ENCODE measurements at regions of chr15 and their contacts with region 1.

Region 1: GRCh38 chr15:44584162-44584749 is 47.3 kb downstream of the EIF3J start:
- DNase-seq: no peak
- H3K4me3 ChIP-seq: no peak overlapping the region
- CTCF ChIP-seq: no peak
- POLR2A ChIP-seq: no peak

Region 2: DNA sequence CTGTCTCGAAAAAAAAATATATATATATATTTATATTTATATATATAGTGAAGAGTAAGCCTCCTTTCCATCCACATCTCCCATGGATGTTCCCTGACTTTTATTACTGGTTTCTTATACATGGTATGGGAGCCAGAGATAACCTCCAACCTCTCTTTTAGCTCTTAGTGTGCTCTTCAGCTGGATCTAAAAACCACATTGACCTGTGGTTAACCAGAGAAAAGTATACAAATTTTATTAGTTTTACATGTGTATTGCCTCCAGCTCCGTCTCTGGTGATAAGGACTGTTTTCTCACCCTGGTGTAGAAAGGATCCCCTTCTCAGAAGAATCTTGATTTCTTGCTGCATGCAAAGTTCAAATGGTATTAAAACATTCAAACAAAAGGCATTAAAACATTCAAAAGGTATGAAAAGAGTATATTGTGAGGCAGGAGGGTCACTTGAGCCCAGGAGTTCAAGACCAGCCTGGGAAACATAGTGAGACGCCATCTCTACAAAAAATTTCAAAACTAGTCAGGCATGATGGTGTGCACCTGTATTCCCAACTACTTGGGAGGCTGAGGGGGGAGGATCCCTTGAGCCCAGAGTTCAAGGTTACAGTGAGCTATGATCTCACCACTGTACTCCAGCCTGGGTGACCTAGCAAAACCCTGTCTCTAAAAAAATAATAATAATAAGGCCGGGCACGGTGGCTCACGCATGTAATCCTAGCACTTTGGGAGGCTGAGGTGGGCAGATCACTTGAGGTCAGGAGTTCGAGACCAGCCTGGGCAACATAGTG is 1650.2 kb before region 1 on chr15:
- intact Hi-C with region 1: no loop called
- DNase-seq: no peak
- H3K4me3 ChIP-seq: no peak overlapping the region
- CTCF ChIP-seq: no peak
- POLR2A ChIP-seq: no peak

Region 3: DNA sequence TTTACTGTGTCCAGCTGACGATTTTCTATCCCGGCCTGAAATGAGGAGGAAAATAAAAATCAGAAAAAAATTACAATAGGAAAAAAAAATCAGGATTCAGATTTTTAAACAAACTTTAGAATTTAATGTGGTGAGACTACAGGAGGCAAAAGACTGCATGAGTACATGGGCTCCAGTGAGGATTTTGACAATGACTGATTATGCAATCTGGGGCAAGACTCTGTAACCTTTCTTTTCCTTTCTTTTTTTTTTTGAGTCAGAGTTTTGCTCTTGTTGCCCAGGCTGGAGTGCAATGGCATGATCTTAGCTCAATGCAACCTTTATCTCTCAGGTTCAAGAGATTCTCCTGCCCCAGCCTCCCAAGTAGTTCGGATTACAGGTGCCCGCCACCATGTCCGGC is 49.3 kb after region 1 on chr15:
- intact Hi-C with region 1: no loop called
- DNase-seq: no peak
- H3K4me3 ChIP-seq: no peak overlapping the region
- CTCF ChIP-seq: no peak
- POLR2A ChIP-seq: no peak

Region 4: DNA sequence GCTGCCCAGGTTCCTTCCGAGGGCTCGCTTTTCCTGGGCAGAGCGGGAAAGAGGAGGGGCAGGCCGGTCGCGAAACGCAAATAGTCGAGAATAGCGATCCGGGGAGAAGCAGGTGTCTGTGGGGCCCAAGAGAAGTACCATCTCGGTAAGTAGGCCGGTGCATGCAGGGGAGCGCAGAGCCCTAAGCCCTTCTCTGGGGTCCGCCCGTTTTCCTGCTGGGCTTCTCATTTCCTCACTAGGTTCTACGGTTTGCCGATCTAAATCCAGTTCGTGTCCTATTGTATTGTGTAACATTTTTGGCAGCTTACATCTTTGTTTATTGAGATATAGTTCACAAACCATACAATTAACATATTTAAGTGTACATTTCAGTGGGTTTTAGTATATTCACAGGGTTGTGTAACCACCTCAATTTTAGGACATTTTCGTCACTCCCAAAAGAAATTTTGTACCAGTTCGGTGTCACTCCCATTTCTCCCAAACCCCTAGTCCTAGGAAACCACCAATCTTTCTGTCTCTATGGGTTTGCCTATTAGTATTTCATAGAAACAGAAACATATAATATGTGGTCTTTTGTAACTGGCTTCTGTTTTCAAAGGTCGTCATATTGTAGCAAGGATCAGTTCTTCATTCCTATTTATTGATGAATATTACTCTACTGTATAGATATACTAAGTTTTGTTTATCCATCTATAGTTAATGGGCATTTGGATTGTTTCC is 145.3 kb after region 1 on chr15:
- intact Hi-C with region 1: loop called (anchors 5 kb)
- DNase-seq: peak in 1 of 2 donors; percentile 89
- H3K4me3 ChIP-seq: peak overlapping the region; percentile 67
- CTCF ChIP-seq: no peak
- POLR2A ChIP-seq: no peak